ENCODE measurements at regions of chr1 and their contacts with region 1.

Region 1: GRCh38 chr1:161045750-161046571 is at the start of gene USF1:
- DNase-seq: peak; percentile 78 to 96 (median 93)
- ATAC-seq: peak; percentile 70 to 81
- H3K4me3 Mint-ChIP-seq: peak within 1 kb of the TSS; percentile 91 to 100 (median 96)
- H3K27ac Mint-ChIP-seq: peak within 1 kb of the TSS; percentile 97 to 100 (median 99)
- H3K4me1 Mint-ChIP-seq: peaks cover 33 to 74% (median 56%) of the 10 kb centered on the region in 4 donors
- H3K27me3 Mint-ChIP-seq: no peaks in the 10 kb centered on the region
- polyA plus RNA-seq, gene USF1: 4.3 to 11.1 (median 7.4) TPM

Region 2: GRCh38 chr1:160954158-160955104 is 91.5 kb before region 1 on chr1 and contains the start of gene ITLN2:
- POLR2A ChIA-PET with region 1: no interaction called
- DNase-seq: peak; percentile 13 to 73 (median 34)
- ATAC-seq: peak; percentile 65 to 66
- H3K4me3 Mint-ChIP-seq: no peak within 1 kb of the TSS
- H3K27ac Mint-ChIP-seq: peak within 1 kb of the TSS in 3 of 10 donors; percentile 30 to 63 (median 48)
- H3K4me1 Mint-ChIP-seq: peaks cover 9 to 22% (median 13%) of the 10 kb centered on the region in 4 donors
- H3K27me3 Mint-ChIP-seq: no peaks in the 10 kb centered on the region
- polyA plus RNA-seq, gene ITLN2: not detected

Region 3: DNA sequence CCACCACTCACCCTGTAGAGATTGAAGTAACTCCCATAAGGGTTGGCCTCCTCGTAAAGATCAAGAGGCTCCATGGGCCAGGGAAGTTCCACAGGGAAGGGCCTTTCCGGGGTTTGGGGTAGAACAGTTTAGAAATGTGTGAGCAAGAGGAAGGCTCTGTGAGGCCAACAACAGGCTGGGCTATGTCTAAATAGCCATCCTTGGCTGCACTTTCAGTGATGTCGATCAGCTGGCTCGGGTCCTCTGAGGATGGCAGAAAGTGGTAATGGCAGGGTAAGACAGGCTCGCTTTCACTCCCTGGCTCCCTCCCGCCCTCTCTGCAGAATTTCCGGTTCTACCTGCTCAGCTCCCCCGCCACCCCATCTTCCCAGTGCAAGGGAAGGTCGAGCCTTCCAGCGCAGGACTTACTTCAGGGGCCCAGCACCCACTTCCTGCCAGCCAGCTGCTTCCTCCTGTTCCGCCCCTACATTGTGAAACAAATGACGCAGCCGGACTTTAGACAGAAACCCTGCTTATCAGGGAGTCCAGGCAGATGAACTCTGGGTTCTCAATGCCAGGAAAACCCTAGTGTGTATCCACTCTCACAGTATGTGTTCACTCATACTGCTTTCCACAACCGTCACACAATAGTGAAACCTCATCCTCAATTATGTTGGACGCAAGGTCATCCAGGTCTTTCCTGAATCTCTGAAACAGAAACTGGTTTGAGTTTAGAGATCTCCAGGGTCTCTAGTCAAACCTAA is 32.3 kb before region 1 on chr1:
- POLR2A ChIA-PET with region 1: interaction called, 46 read pairs
- DNase-seq: peak; percentile 30 to 77 (median 58)
- ATAC-seq: peak; percentile 89 to 91
- H3K4me3 Mint-ChIP-seq: peak overlapping the region; percentile 73 to 89 (median 83)
- H3K27ac Mint-ChIP-seq: peak overlapping the region; percentile 86 to 99 (median 95)
- H3K4me1 Mint-ChIP-seq: peaks cover 15 to 41% (median 33%) of the 10 kb centered on the region in 4 donors
- H3K27me3 Mint-ChIP-seq: no peaks in the 10 kb centered on the region

Region 4: GRCh38 chr1:161059293-161059692 is 13.3 kb after region 1 on chr1:
- POLR2A ChIA-PET with region 1: interaction called, 429 read pairs
- DNase-seq: no peak
- ATAC-seq: no peak
- H3K4me3 Mint-ChIP-seq: peak overlapping the region in 6 of 10 donors; percentile 12 to 72 (median 48)
- H3K27ac Mint-ChIP-seq: peak overlapping the region; percentile 68 to 96 (median 84)
- H3K4me1 Mint-ChIP-seq: peaks cover 34 to 78% (median 68%) of the 10 kb centered on the region in 4 donors
- H3K27me3 Mint-ChIP-seq: no peaks in the 10 kb centered on the region

Region 5: DNA sequence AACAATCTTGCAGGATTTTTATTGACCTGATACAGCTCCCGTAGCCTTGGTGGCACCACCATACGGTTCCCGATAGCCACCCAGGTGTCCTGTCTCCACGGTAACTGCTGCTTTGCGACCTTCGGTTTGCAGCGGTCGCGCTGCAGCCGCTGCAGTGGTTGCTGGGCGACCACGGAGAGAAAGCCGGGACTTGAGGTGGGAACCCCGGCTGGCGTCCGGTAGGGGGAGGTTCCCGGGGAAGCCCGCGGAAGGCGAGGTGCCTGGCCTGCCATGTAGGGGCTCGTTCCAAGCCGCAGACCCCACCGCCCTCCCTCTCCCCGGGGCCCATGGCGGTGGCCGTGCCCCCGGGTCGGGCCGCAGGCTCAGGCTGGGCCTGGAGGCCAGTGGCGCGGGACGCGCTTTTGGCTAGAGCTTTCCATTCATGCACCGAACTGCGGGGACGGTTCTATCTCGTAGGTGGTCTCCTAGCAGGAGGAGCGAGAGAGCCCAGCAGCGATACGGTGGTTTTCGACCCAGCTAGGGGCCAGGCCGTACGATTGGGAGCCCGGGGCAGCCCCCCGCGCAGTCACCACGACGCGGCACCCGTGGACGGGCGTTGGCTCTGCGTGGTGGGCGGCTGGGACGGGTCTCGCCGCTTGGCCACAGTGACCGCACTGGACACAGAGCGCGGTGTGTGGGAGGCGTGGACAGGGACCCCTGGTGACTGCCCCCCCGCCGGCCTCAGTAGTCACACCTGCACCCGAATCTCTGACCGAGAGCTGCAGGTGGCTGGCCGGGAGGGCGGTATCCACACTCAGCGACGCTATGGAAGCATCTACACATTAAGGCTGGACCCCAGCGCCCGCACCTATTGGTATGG is 52.5 kb after region 1 on chr1 and contains the start of gene KLHDC9:
- POLR2A ChIA-PET with region 1: interaction called, 69 read pairs
- DNase-seq: peak; percentile 33 to 79 (median 60)
- ATAC-seq: peak; percentile 71 to 78
- H3K4me3 Mint-ChIP-seq: peak within 1 kb of the TSS; percentile 83 to 96 (median 92)
- H3K27ac Mint-ChIP-seq: peak within 1 kb of the TSS; percentile 83 to 100 (median 88)
- H3K4me1 Mint-ChIP-seq: peaks cover 16 to 29% (median 25%) of the 10 kb centered on the region in 4 donors
- H3K27me3 Mint-ChIP-seq: peaks cover 0 to 4% (median 0%) of the 10 kb centered on the region in 5 donors
- polyA plus RNA-seq, gene KLHDC9: 0.30 to 1.5 (median 0.62) TPM

Region 6: GRCh38 chr1:161132410-161133219 is 86.7 kb after region 1 on chr1 and contains the start of gene DEDD:
- POLR2A ChIA-PET with region 1: interaction called, 17 read pairs
- DNase-seq: peak; percentile 74 to 95 (median 88)
- ATAC-seq: peak; percentile 95
- H3K4me3 Mint-ChIP-seq: no peak within 1 kb of the TSS
- H3K27ac Mint-ChIP-seq: peak within 1 kb of the TSS in 2 of 10 donors; percentile 92 to 96
- H3K4me1 Mint-ChIP-seq: peaks cover 33 to 62% (median 55%) of the 10 kb centered on the region in 4 donors
- H3K27me3 Mint-ChIP-seq: no peaks in the 10 kb centered on the region
- polyA plus RNA-seq, gene DEDD: 29.0 to 35.4 (median 29.3) TPM

Region 7: GRCh38 chr1:161201828-161202725 is 156.1 kb after region 1 on chr1 and contains the start of gene NDUFS2:
- POLR2A ChIA-PET with region 1: interaction called, 11 read pairs
- DNase-seq: peak; percentile 83 to 98 (median 94)
- ATAC-seq: peak; percentile 97 to 98
- H3K4me3 Mint-ChIP-seq: peak within 1 kb of the TSS; percentile 92 to 97 (median 94)
- H3K27ac Mint-ChIP-seq: peak within 1 kb of the TSS; percentile 95 to 99 (median 99)
- H3K4me1 Mint-ChIP-seq: peaks cover 32 to 83% (median 71%) of the 10 kb centered on the region in 4 donors
- H3K27me3 Mint-ChIP-seq: no peaks in the 10 kb centered on the region
- polyA plus RNA-seq, gene NDUFS2: 78.6 to 106 (median 95.4) TPM